Testis (tissue), 5 donors: ENCODE measurements at regions of chr7 and their contacts with region 1.

Region 1: DNA sequence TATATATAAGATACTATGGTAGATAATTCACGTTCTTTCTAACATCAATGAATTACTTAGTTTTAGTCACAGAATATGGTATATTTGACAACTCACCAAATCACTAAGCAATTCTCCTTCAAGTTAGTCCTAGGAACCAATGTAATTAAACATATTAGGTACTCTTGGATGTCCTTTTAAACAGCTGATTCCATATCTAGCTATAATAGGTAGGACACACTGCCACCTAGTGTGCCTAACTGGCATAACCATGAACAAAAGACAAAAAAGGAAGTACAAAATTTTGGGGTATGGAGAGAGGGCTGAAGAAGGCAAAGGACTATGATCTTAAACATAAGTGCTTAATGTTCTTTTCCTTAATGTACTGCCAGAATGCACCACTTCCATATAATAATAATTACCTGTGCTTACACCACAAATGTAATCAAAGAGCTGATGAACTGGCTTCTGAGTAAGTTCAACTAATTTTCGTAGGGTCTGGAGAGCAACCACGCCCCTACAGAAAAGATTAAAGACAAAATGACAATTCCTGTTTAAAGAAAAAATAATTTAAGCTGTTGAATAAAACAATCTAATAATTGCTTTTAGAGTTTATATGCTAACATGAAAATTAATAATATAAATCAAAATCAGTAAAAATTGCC is 28.7 kb downstream of the PNPLA8 start:
- DNase-seq: peak; percentile 52
- H3K4me3 ChIP-seq: no peak overlapping the region
- H3K27ac ChIP-seq: no peak overlapping the region
- H3K4me1 ChIP-seq: no peaks in the 10 kb centered on the region
- H3K27me3 ChIP-seq: no peaks in the 10 kb centered on the region
- CTCF ChIP-seq: peak; percentile 31 to 80 (median 69)
- POLR2A ChIP-seq: no peak

Region 2: GRCh38 chr7:108181073-108181985 is 315.9 kb before region 1 on chr7:
- intact Hi-C with region 1: loop called (anchors 10 kb)
- DNase-seq: no peak
- H3K4me3 ChIP-seq: no peak overlapping the region
- H3K27ac ChIP-seq: no peak overlapping the region
- H3K4me1 ChIP-seq: no peaks in the 10 kb centered on the region
- H3K27me3 ChIP-seq: no peaks in the 10 kb centered on the region
- CTCF ChIP-seq: peak; percentile 9 to 85 (median 55)
- POLR2A ChIP-seq: no peak

Region 3: DNA sequence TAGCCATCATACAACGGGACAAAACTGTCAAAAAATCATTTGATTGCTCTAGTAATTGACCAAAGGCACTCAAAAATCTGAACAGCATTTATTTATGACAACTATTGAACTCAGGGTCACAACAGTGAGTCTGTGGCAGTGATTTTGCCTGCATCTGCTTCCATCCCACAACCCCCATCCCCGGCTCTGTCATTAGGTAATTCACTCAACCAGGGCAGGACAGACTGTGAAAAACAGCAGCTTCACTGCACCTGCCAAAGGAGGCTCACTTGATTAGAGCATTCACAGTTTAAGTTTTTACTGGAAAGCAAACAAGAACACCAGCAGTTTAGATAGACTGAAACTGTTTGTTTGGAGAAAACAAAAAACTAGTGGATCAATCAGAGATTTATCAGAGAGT is 63.2 kb before region 1 on chr7:
- intact Hi-C with region 1: no loop called
- DNase-seq: no peak
- H3K4me3 ChIP-seq: no peak overlapping the region
- H3K27ac ChIP-seq: no peak overlapping the region
- H3K4me1 ChIP-seq: no peaks in the 10 kb centered on the region
- H3K27me3 ChIP-seq: no peaks in the 10 kb centered on the region
- CTCF ChIP-seq: no peak
- POLR2A ChIP-seq: no peak

Region 4: DNA sequence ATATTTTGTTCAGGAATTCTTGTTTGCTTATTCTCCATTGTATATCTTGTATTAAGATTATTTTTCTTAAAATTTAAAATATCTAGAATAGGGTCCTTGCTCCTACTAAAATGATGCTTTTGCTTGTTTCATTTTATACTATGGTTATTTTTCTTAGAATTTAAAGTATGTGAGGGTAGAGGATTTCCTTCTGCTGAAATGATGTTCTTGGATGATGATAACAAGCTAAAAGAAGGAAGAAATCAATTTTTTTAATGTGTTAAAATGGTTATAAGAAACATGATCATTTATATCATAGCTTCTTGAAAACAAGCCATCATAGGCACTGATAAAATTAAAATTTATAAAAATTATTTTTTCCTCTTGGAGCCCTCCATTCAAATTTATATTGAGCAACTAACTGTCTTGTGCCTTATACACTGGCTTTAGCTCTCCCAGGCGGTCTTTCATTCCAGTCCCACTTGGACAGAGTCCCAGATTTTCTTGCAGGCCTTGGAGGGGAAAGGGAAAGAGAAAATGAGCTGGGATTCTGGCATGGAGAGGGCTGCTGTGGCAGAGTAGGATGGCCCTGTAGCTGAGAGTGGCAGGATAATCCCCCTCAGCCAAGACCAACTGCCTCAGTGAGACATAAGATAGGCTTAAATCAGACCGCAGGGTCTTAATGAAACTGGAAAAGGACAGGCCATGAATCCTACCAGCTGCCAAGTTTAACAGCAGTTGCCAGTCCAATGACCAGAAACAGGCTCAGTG is 132.6 kb after region 1 on chr7:
- intact Hi-C with region 1: no loop called
- DNase-seq: peak; percentile 18
- H3K4me3 ChIP-seq: no peak overlapping the region
- H3K27ac ChIP-seq: no peak overlapping the region
- H3K4me1 ChIP-seq: no peaks in the 10 kb centered on the region
- H3K27me3 ChIP-seq: no peaks in the 10 kb centered on the region
- CTCF ChIP-seq: no peak
- POLR2A ChIP-seq: no peak